ENCODE measurements at regions of chrX and their contacts with region 1.

Region 1: DNA sequence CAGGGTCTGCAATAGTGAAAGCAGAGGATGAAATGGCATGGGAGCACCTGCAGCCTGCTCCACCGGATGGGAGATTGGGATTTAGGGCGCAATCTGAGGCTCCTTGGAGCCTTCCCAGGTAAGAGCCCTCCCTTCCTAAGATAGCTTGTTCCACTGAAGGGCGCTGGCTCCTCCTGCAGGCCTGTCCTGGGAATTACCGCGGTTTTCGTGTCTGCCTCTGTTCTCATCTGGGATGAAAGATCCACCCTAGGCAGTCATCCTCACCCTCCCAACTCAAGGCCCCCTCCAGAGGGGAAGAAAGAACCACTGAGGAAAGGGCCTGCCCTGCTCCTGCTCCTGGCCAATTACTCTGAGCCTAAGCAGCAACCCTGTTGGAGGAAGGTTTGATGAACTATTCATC is 547.5 kb downstream of the SMARCA1 start:
- DNase-seq: peak; percentile 47
- H3K4me3 ChIP-seq: no peak overlapping the region
- H3K27ac ChIP-seq: no peak overlapping the region
- H3K4me1 ChIP-seq: no peaks in the 10 kb centered on the region
- H3K27me3 ChIP-seq: no peaks in the 10 kb centered on the region
- CTCF ChIP-seq: peak; percentile 42

Region 2: DNA sequence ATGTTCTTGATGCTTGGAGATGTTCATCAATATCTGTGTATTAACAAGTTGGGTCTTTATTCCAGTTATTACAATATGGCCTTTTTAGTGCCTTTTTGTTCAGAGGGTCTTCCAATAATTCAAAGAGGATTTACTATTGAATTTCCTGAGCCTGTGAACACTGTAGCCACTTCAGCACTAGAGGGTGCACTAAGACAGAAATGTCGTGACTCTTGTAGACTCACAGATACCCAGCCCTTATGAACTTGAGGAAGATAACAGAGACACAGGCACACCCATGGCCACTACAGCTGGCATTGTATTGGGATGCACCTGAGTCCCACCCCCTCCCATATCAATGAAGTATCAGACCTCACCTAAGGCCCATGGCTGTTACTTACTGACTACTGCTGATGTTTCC is 869.1 kb before region 1 on chrX:
- intact Hi-C with region 1: loop called (anchors 5 kb)
- DNase-seq: no peak
- H3K4me3 ChIP-seq: no peak overlapping the region
- H3K27ac ChIP-seq: no peak overlapping the region
- H3K4me1 ChIP-seq: no peaks in the 10 kb centered on the region
- H3K27me3 ChIP-seq: no peaks in the 10 kb centered on the region
- CTCF ChIP-seq: no peak

Region 3: DNA sequence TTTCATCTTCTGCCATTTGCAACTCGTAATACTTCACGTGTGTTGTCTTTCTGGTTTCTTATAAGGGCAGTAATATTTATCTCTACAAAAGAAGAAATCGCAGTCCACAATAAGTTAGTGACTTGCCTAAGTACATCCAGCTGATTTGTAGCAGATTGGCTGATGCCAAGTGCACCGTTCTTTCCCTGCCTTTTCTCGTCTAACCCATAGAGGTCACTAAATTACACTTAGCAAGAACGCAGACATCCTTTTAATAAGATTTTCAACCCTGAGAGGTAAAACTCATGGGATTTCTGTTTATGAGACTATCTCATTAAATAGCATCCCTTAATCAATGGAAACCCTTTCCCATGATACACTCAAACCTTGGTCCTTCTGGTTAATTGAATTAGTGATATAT is 514.9 kb before region 1 on chrX:
- intact Hi-C with region 1: loop called (anchors 10 kb)
- DNase-seq: no peak
- H3K4me3 ChIP-seq: no peak overlapping the region
- H3K27ac ChIP-seq: no peak overlapping the region
- H3K4me1 ChIP-seq: no peaks in the 10 kb centered on the region
- H3K27me3 ChIP-seq: no peaks in the 10 kb centered on the region
- CTCF ChIP-seq: no peak

Region 4: GRCh38 chrX:128816919-128817318 is 158.8 kb before region 1 on chrX:
- intact Hi-C with region 1: loop called (anchors 2 kb)
- DNase-seq: no peak
- H3K4me3 ChIP-seq: no peak overlapping the region
- H3K27ac ChIP-seq: no peak overlapping the region
- H3K4me1 ChIP-seq: no peaks in the 10 kb centered on the region
- H3K27me3 ChIP-seq: no peaks in the 10 kb centered on the region
- CTCF ChIP-seq: peak; percentile 50

Region 5: GRCh38 chrX:129039180-129039579 is 63.4 kb after region 1 on chrX:
- intact Hi-C with region 1: no loop called
- DNase-seq: no peak
- H3K4me3 ChIP-seq: no peak overlapping the region
- H3K27ac ChIP-seq: no peak overlapping the region
- H3K4me1 ChIP-seq: no peaks in the 10 kb centered on the region
- H3K27me3 ChIP-seq: no peaks in the 10 kb centered on the region
- CTCF ChIP-seq: no peak

Region 6: GRCh38 chrX:129058405-129058804 is 82.7 kb after region 1 on chrX:
- intact Hi-C with region 1: no loop called
- DNase-seq: no peak
- H3K4me3 ChIP-seq: no peak overlapping the region
- H3K27ac ChIP-seq: no peak overlapping the region
- H3K4me1 ChIP-seq: no peaks in the 10 kb centered on the region
- H3K27me3 ChIP-seq: no peaks in the 10 kb centered on the region
- CTCF ChIP-seq: no peak

Measured in colonic mucosa (tissue), 4 donors.